HepG2 (cell line): ENCODE measurements at regions of chr16 and their contacts with region 1.

Region 1: GRCh38 chr16:55543472-55543871 is 23.0 kb upstream of the CAPNS2 start:
- DNase-seq: peak; percentile 35
- ATAC-seq: no peak
- H3K4me3 ChIP-seq: no peak overlapping the region
- H3K27ac ChIP-seq: no peak overlapping the region
- H3K4me1 ChIP-seq: no peaks in the 10 kb centered on the region
- H3K27me3 ChIP-seq: no peaks in the 10 kb centered on the region
- CTCF ChIP-seq: 0 out of 2 replicates have a peak, but pooled peaks have one; percentile 16
- EP300 ChIP-seq: no peak
- POLR2A ChIP-seq: no peak
- RAD21 ChIP-seq: 0 out of 2 replicates have a peak, but pooled peaks have one; percentile 33

Region 2: DNA sequence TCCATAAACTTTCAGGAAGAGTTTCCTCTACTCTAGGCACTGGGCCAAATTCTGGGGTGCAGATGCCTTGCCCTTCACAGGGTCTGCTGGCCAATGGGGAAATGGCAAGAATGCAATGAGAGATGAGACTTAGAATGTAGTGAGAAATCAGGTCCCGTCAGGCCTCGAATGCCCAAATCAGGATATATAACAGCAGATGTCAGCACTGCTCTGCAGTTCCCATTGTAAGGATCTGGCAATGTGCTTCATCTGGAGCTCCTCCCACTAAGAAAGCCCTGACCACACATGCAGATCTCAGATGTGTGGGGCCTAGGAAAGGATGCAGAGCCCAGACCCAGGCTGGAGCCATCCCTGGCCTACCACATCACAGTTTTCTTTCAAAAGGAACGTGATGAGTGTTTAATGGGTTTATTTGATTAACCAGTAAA is 48.5 kb before region 1 on chr16:
- CTCF ChIA-PET with region 1: no interaction called
- POLR2A ChIA-PET with region 1: no interaction called
- in situ Hi-C with region 1: loop called (anchors 5 kb)
- intact Hi-C with region 1: no loop called
- DNase-seq: peak; percentile 49
- ATAC-seq: peak; percentile 47
- H3K4me3 ChIP-seq: no peak overlapping the region
- H3K27ac ChIP-seq: no peak overlapping the region
- H3K4me1 ChIP-seq: peaks cover 38% of the 10 kb centered on the region
- H3K27me3 ChIP-seq: no peaks in the 10 kb centered on the region
- CTCF ChIP-seq: peak; percentile 64
- EP300 ChIP-seq: no peak
- POLR2A ChIP-seq: no peak
- RAD21 ChIP-seq: peak; percentile 15; the same call in 1 of the 2 replicates

Region 3: GRCh38 chr16:55567382-55567781 is 23.9 kb after region 1 on chr16:
- CTCF ChIA-PET with region 1: no interaction called
- POLR2A ChIA-PET with region 1: no interaction called
- in situ Hi-C with region 1: no loop called
- intact Hi-C with region 1: no loop called
- DNase-seq: no peak
- ATAC-seq: no peak
- H3K4me3 ChIP-seq: no peak overlapping the region
- H3K27ac ChIP-seq: no peak overlapping the region
- H3K4me1 ChIP-seq: peaks cover 21% of the 10 kb centered on the region
- H3K27me3 ChIP-seq: no peaks in the 10 kb centered on the region
- CTCF ChIP-seq: no peak
- EP300 ChIP-seq: no peak
- POLR2A ChIP-seq: no peak
- RAD21 ChIP-seq: no peak

Region 4: GRCh38 chr16:55638256-55638655 is 94.8 kb after region 1 on chr16:
- CTCF ChIA-PET with region 1: interaction called, 3 read pairs
- POLR2A ChIA-PET with region 1: no interaction called
- in situ Hi-C with region 1: no loop called
- intact Hi-C with region 1: loop called (anchors 5 kb)
- DNase-seq: no peak
- ATAC-seq: no peak
- H3K4me3 ChIP-seq: no peak overlapping the region
- H3K27ac ChIP-seq: no peak overlapping the region
- H3K4me1 ChIP-seq: peaks cover 78% of the 10 kb centered on the region
- H3K27me3 ChIP-seq: no peaks in the 10 kb centered on the region
- CTCF ChIP-seq: no peak
- EP300 ChIP-seq: no peak
- POLR2A ChIP-seq: no peak
- RAD21 ChIP-seq: no peak

Region 5: GRCh38 chr16:55701442-55702319 is 158.2 kb after region 1 on chr16:
- CTCF ChIA-PET with region 1: interaction called, 25 read pairs
- POLR2A ChIA-PET with region 1: no interaction called
- in situ Hi-C with region 1: loop called (anchors 5 kb)
- intact Hi-C with region 1: loop called (anchors 1 kb)
- DNase-seq: peak; percentile 73
- ATAC-seq: peak; percentile 97
- H3K4me3 ChIP-seq: no peak overlapping the region
- H3K27ac ChIP-seq: no peak overlapping the region
- H3K4me1 ChIP-seq: 0 out of 2 replicates have a peak, but pooled peaks cover 6% of the 10 kb centered on the region
- H3K27me3 ChIP-seq: peaks cover 0 to 2% of the 10 kb centered on the region in 2 experiments; a peak in 1 of 5 replicates
- CTCF ChIP-seq: peak; percentile 98
- EP300 ChIP-seq: no peak
- POLR2A ChIP-seq: no peak
- RAD21 ChIP-seq: peak; percentile 90